ENCODE measurements at regions of chr15 and their contacts with region 1.

Region 1: DNA sequence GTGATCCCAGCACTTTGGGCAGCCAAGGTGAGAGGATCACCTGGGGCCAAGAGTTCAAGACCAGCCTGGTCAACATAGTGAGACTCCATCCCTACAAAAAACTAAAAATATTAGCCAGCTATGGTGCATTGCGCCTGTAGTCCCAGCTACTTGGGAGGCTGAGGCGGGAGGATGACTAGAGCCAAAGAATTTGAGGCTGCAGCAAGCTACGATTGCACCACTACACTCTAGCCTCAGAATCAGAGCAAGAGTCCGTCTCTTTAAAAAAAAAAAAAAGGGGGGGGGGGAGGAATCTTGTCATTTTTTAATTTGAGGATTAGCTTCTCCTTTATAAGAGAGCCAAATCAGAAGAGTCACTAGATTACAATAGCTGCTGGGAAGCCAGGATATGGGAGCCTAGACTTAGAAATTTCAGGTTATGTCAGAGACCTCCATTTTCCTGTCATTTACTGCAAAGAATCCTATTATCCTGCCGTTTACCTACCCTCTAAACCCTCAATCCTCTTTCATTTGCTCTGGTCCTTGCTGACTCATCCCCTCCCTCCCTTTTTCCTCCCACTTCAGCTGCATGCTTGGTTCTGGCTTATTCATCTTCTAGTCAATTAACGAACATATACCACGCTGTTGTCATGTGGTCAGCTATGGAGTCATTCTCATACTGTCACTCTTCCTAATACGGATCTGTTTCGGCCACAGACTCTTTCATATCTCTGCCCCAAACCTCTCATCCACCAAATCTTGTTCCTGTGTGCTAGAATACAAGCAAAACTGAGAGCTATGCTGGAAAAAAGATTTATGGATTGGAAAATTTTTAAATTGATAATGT is 83.8 kb upstream of the PPIB start:
- DNase-seq: peak; percentile 93
- ATAC-seq: peak; percentile 70
- H3K4me3 ChIP-seq: no peak overlapping the region
- H3K27ac ChIP-seq: no peak overlapping the region
- H3K4me1 ChIP-seq: peaks cover 5% of the 10 kb centered on the region
- H3K27me3 ChIP-seq: no peaks in the 10 kb centered on the region
- CTCF ChIP-seq: no peak
- POLR2A ChIP-seq: no peak
- RAD21 ChIP-seq: no peak

Region 2: GRCh38 chr15:64324165-64324877 is 77.7 kb after region 1 on chr15:
- CTCF ChIA-PET with region 1: no interaction called
- POLR2A ChIA-PET with region 1: interaction called, 10 read pairs
- dilution Hi-C with region 1: no loop called
- in situ Hi-C with region 1: no loop called
- intact Hi-C with region 1: no loop called
- DNase-seq: peak; percentile 73
- ATAC-seq: no peak
- H3K4me3 ChIP-seq: no peak overlapping the region
- H3K27ac ChIP-seq: no peak overlapping the region
- H3K4me1 ChIP-seq: no peaks in the 10 kb centered on the region
- H3K27me3 ChIP-seq: no peaks in the 10 kb centered on the region
- CTCF ChIP-seq: no peak
- POLR2A ChIP-seq: no peak
- RAD21 ChIP-seq: no peak

Region 3: GRCh38 chr15:64681424-64682024 is 434.9 kb after region 1 on chr15:
- CTCF ChIA-PET with region 1: no interaction called
- POLR2A ChIA-PET with region 1: no interaction called
- dilution Hi-C with region 1: no loop called
- in situ Hi-C with region 1: no loop called
- intact Hi-C with region 1: no loop called
- DNase-seq: peak; percentile 65
- ATAC-seq: peak; percentile 83
- H3K4me3 ChIP-seq: no peak overlapping the region
- H3K27ac ChIP-seq: no peak overlapping the region
- H3K4me1 ChIP-seq: peaks cover 3% of the 10 kb centered on the region; the same call in 1 of the 2 replicates
- H3K27me3 ChIP-seq: no peaks in the 10 kb centered on the region
- CTCF ChIP-seq: peak; percentile 92
- POLR2A ChIP-seq: no peak
- RAD21 ChIP-seq: peak; percentile 84